AG04449 (cell line): ENCODE measurements at regions of chr15 and their contacts with region 1.

Region 1: DNA sequence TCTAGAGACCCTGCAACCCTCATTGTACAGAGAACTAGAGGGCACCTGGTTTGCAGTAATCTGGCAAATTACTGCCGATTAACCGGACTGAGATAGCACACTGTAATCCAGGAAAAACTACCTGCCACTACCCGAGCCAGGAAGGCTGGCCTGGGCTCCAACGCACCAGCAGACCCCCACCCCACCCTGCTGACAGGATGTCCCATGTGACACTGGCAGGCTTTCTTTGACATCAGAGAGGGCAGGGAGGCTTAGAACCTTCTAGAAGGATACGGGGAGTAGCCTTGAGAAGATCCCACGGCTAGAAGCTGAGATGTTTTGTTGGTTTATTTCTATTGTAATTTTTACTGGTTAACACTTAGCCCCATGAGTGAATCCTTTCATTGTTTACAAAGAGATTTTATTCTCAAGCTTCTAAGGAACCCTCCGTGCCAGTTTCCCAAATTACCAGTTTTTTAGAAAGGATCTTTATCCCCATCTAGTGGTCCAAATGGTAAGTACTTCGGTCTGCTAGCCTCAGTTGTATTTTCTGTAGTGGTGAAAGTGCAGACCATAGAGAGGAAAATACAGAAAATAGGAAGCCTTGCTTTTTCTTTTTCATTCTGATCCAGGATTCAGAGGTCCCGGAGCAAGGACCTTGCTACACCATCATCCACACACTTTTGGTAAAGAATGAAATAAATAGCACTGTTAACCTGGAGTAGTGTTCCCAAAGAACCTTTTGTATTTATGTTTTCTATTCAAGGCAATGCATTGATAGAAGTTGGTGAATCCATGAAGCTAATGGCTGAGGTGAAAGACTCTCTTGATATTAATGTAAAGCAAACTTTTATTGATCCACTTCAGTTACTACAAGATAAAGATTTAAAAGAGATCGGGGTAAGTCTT is 81.9 kb upstream of the ADAMTSL3 start:
- DNase-seq: no peak
- H3K4me3 ChIP-seq: no peak overlapping the region
- CTCF ChIP-seq: peak; percentile 37

Region 2: DNA sequence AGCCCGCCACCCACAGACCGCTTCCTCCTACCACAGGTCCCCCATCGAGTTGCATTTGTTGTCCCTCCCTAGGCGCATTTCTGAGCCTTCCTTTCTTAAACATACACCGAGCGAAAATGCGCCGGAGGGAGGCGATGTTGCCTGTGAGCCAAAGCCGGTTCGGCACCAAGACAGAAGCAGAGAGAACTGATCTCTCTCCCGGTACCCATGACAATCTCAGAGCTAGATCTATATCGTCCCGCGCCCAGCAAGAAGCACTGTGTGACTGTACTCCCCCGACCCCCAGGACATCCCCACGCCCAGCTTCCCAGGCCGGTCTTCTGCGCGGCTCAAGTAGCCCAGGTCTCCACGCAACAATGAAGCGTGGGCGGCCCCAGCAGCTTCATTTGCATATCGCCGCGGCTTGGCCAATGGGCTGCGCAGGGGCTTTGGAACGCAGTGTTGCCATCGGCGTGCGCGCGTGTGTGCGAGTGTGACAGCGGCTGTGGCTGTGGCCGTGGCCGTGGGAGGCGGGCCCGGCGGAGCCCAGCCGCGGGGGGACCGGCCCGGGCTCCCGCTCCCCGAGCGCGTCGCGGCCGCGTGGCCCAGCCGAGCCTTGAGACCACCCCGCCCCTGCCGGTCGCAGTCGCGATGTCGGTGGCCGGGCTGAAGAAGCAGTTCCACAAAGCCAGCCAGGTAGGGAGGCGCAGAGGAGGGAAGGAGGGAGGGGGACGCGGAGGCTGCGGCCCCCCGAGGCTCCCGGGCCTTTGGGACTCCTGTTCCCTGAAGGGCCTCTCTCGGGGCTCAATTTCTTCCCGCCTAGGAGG is 125.0 kb before region 1 on chr15 and contains the start of gene SH3GL3:
- CTCF ChIA-PET with region 1: interaction called, 11 read pairs
- POLR2A ChIA-PET with region 1: no interaction called
- DNase-seq: no peak
- H3K4me3 ChIP-seq: peak within 1 kb of the TSS; percentile 55
- CTCF ChIP-seq: peak; percentile 16

Region 3: DNA sequence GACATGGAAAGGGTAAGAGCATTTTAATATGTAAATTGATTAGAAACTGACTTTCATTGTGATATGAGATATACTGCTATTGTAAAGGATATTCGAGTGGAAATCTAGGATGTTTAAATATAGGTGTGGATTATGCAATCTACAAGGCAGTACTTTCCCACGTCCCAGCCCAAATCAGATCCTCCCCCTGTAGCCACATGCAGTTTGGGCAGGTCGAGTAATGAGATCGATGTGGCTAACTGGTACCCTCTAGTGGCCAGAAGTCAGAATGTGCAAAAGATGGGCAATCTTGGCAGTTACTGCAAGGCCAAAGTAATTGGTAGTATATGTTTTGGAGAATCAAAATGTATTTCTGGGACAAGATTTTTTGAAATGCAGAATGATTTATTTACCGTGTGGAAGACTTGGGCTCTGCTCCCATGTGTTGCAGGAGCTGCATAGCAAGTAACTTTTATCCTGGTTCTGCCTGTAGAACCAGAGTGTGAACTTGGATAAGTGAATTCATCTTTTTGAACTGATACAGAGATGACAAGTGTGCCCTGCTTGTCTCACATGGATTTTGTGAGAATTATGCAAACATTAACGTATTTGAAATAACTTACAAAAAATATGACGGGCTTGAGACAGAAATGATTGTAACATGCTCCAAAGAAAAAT is 12.6 kb before region 1 on chr15:
- CTCF ChIA-PET with region 1: interaction called, 61 read pairs
- POLR2A ChIA-PET with region 1: no interaction called
- DNase-seq: peak; percentile 21
- H3K4me3 ChIP-seq: no peak overlapping the region
- CTCF ChIP-seq: peak; percentile 81